Uterus (tissue), 4 donors: ENCODE measurements at regions of chr19 and their contacts with region 1.

Region 1: DNA sequence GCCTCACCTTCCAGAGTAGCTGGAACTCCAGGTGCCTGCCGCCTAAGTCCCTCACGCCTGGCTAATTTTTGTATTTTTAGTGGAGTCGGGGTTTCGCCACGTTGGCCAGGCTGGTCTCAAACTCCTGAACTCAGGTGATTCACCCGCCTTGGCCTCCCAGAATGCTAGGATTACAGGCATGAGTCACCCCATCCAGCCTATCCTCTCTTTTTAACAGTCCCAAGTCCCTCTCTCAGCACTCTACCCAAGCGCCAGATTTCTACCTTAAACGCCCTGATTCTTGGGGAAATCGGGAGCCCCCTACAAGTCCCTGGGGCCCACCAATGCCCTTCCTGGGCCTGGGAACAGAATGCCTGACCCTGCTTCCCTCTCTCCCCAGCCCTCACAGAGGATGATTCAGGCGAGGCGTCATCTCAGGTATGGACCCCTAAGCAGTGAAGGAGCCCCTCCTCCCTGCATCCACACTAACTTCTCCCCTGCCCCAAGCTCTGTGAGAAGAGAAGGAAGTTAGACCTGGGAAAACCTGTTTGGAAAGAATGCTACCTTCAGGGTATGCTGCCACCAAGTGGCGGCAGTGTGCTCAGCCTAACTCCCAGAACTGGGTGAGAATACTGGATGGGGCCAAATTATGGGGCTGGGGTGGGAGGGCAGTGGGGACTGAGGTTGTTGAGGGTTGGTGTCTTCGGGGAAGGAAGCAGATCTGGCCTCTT is 20.8 kb upstream of the EBI3 start:
- DNase-seq: no peak
- H3K4me3 ChIP-seq: no peak overlapping the region
- H3K27ac ChIP-seq: no peak overlapping the region
- H3K4me1 ChIP-seq: no peaks in the 10 kb centered on the region
- H3K27me3 ChIP-seq: no peaks in the 10 kb centered on the region
- CTCF ChIP-seq: no peak
- POLR2A ChIP-seq: no peak

Region 2: DNA sequence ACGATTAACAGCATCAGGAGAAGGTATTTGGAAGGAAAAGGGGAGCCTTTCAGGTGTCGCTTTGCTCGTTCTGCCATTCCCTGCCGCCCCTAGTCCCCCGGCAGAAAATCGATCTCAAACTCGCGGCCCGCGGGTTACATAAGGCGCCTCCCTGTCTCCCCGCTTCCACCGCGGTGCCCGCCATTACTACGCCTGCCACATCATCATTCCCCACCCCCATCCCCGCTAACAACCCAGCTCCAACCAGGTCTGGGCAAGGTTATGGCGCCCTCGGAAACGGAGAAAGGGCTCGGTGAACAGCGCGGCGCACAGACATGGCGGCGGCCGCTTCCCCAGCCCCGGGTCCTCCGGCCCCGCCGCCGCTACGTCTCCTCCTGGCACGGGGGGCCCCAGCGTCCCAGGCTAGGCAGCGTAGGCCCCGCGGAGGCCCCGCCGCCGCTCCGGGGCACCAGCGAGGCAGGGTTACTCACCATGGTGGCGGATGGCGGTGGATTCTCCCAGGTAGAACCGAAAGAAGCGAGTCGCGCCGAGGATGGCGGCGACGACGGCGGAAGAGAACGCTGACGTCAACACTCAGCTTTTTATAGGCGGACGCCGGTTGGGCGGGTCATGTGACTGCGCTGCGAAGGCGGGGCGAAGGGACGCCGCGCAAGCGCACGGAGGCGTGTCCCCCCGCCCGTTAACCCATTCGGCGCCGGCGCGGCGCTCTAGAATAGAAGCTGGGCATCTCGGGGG is 223.5 kb before region 1 on chr19 and contains the start of gene EEF2:
- intact Hi-C with region 1: loop called (anchors 10 kb)
- DNase-seq: peak; percentile 90 to 92
- H3K4me3 ChIP-seq: peak within 1 kb of the TSS; percentile 67 to 85
- H3K27ac ChIP-seq: peak within 1 kb of the TSS; percentile 94 to 96
- H3K4me1 ChIP-seq: peaks cover 0 to 11% of the 10 kb centered on the region in 2 donors
- H3K27me3 ChIP-seq: no peaks in the 10 kb centered on the region
- CTCF ChIP-seq: peak in 2 of 4 experiments; percentile 41 to 53
- POLR2A ChIP-seq: peak; percentile 96 to 100
- total RNA-seq, gene EEF2: 936 to 2,469 (median 1,635) TPM

Region 3: GRCh38 chr19:4103073-4103418 is 105.5 kb before region 1 on chr19:
- intact Hi-C with region 1: no loop called
- DNase-seq: no peak
- H3K4me3 ChIP-seq: no peak overlapping the region
- H3K27ac ChIP-seq: no peak overlapping the region
- H3K4me1 ChIP-seq: no peaks in the 10 kb centered on the region
- H3K27me3 ChIP-seq: no peaks in the 10 kb centered on the region
- CTCF ChIP-seq: no peak
- POLR2A ChIP-seq: no peak